IMR-90 (cell line): ENCODE measurements at regions of chr7 and their contacts with region 1.

Region 1: DNA sequence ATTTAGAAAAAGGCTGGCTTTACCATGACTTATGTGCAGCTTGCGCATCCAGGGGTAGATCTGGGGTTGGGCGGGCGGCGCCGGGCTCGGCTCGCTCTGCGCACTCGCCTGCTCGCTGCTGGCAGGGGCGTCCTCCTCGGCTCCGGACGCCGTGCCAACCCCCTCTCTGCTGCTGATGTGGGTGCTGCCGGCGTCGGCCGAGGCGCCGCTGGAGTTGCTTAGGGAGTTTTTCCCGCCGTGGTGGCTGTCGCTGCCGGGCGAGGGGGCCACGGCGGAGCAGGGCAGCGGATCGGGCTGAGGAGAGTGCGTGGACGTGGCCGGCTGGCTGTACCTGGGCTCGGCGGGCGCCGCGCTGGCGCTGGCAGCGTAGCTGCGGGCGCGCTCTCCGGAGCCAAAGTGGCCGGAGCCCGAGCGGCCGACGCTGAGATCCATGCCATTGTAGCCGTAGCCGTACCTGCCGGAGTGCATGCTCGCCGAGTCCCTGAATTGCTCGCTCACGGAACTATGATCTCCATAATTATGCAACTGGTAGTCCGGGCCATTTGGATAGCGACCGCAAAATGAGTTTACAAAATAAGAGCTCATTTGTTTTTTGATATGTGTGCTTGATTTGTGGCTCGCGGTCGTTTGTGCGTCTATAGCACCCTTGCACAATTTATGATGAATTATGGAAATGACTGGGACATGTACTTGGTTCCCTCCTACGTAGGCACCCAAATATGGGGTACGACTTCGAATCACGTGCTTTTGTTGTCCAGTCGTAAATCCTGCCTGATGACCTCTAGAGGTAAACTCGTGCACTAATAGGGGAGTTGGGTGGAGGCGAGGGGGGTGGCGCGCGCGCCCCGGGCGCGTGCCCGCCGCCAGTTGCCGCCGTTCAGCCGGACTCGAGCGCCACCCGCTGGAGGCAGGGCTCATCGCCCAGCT is at the start of gene HOXA5:
- DNase-seq: peak; percentile 100
- ATAC-seq: peak; percentile 64
- H3K4me3 ChIP-seq: peak within 1 kb of the TSS; percentile 93
- H3K27ac ChIP-seq: peak within 1 kb of the TSS; percentile 93
- H3K4me1 ChIP-seq: peaks cover 16% of the 10 kb centered on the region
- H3K27me3 ChIP-seq: no peaks in the 10 kb centered on the region
- CTCF ChIP-seq: peak; percentile 98
- POLR2A ChIP-seq: peak; percentile 89
- RAD21 ChIP-seq: peak; percentile 95
- total RNA-seq, gene HOXA5: 19.9 and 23.9 TPM in 2 replicates

Region 2: GRCh38 chr7:25862260-25863037 is 1280.8 kb before region 1 on chr7:
- CTCF ChIA-PET with region 1: no interaction called
- POLR2A ChIA-PET with region 1: no interaction called
- dilution Hi-C with region 1: no loop called
- in situ Hi-C with region 1: no loop called
- intact Hi-C with region 1: loop called (anchors 1 kb)
- DNase-seq: peak; percentile 100
- ATAC-seq: peak; percentile 97
- H3K4me3 ChIP-seq: no peak overlapping the region; the same call in 1 of the 2 replicates
- H3K27ac ChIP-seq: no peak overlapping the region
- H3K4me1 ChIP-seq: no peaks in the 10 kb centered on the region
- H3K27me3 ChIP-seq: peaks cover 10% of the 10 kb centered on the region
- CTCF ChIP-seq: no peak
- POLR2A ChIP-seq: no peak
- RAD21 ChIP-seq: no peak

Region 3: DNA sequence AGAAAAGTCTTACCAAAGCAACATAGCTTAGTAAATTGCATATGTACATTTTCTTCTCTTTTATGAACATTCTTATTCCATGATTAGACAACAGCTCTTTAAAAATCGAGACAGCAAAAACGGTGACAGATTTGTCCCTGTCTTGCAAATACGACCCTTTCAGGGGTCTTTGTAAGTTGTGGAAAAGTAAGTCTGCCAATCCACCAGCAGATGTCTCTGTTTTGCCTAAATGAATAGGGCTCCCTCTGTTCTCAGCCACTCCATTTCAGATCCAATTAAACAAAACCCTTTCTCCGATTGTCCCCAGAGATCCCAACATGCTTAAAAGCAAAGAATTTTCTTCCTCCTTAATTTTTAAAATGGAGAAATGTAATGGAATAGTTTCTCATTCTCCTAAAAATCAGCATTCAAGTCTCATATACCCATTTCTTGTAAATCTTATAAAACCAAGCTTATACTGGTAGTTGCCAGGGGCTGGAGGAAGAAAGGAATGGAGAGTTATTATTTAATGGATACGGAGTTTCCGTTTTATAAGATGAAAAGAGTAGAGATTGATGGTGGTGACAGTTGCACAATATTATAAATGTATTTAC is 1052.3 kb before region 1 on chr7:
- CTCF ChIA-PET with region 1: no interaction called
- POLR2A ChIA-PET with region 1: no interaction called
- dilution Hi-C with region 1: no loop called
- in situ Hi-C with region 1: no loop called
- intact Hi-C with region 1: loop called (anchors 5 kb)
- DNase-seq: peak; percentile 74
- ATAC-seq: peak; percentile 89
- H3K4me3 ChIP-seq: no peak overlapping the region
- H3K27ac ChIP-seq: no peak overlapping the region
- H3K4me1 ChIP-seq: no peaks in the 10 kb centered on the region
- H3K27me3 ChIP-seq: peaks cover 11% of the 10 kb centered on the region
- CTCF ChIP-seq: peak; percentile 76
- POLR2A ChIP-seq: no peak
- RAD21 ChIP-seq: peak; percentile 80

Region 4: GRCh38 chr7:26686448-26686981 is 456.8 kb before region 1 on chr7:
- CTCF ChIA-PET with region 1: interaction called, 9 read pairs
- POLR2A ChIA-PET with region 1: no interaction called
- dilution Hi-C with region 1: no loop called
- in situ Hi-C with region 1: no loop called
- intact Hi-C with region 1: loop called (anchors 1 kb)
- DNase-seq: peak; percentile 92
- ATAC-seq: peak; percentile 81
- H3K4me3 ChIP-seq: no peak overlapping the region
- H3K27ac ChIP-seq: peak overlapping the region; percentile 22; the same call in 1 of the 2 replicates
- H3K4me1 ChIP-seq: peaks cover 8% of the 10 kb centered on the region
- H3K27me3 ChIP-seq: no peaks in the 10 kb centered on the region
- CTCF ChIP-seq: peak; percentile 64
- POLR2A ChIP-seq: no peak
- RAD21 ChIP-seq: peak; percentile 61

Region 5: DNA sequence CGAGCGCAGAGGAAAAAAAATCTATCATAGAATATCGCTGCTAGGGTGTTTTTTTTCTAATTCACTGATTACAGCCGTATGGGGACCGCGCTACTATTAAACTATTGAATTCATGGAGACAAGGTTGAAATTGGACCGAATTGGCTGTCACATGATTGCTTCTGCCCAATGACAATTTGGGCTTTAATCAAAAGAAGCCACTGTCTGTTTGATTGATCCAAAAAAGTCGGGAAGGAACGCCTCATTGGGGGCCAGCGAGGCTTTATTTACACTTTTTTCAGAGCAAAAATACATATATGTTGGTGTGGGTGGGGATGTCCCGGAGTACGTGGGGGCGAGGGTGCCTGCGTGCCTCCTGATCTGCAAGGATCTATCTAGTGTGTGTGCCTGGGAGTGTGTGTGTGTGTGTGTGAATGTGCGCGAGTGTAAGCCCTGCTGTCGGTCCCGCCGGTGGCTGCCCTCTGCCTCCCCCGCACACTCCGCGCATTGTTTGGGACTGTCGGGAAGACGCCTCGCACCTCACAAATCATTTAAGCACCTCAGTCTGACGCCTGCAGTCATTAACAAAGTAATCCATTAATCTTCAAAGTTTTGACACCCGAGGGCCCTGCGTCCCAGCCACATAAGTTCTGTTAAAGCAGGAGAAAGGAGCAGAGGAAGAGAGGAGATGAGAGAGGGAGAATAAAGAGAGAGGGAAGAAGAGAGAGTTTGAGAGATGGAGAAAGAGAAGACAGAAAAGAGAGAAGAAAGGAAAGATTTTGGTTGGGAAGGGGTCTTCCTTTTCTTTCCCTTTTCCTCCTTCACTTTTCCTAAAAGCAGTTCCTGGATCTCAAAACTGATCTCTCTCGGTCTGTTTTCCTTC is 40.5 kb before region 1 on chr7 and contains the start of gene HOXA2:
- CTCF ChIA-PET with region 1: interaction called, 4 read pairs
- POLR2A ChIA-PET with region 1: no interaction called
- dilution Hi-C with region 1: no loop called
- in situ Hi-C with region 1: loop called (anchors 5 kb)
- intact Hi-C with region 1: no loop called
- DNase-seq: peak; percentile 91
- ATAC-seq: peak; percentile 18
- H3K4me3 ChIP-seq: peak within 1 kb of the TSS; percentile 52
- H3K27ac ChIP-seq: peak within 1 kb of the TSS; percentile 96
- H3K4me1 ChIP-seq: peaks cover 31% of the 10 kb centered on the region
- H3K27me3 ChIP-seq: no peaks in the 10 kb centered on the region
- CTCF ChIP-seq: no peak
- POLR2A ChIP-seq: no peak
- RAD21 ChIP-seq: no peak
- total RNA-seq, gene HOXA2: 1.6 and 1.7 TPM in 2 replicates

Region 6: GRCh38 chr7:27759491-27759890 is 616.2 kb after region 1 on chr7:
- CTCF ChIA-PET with region 1: no interaction called
- POLR2A ChIA-PET with region 1: no interaction called
- dilution Hi-C with region 1: no loop called
- in situ Hi-C with region 1: no loop called
- intact Hi-C with region 1: no loop called
- DNase-seq: peak; percentile 40
- ATAC-seq: peak; percentile 63
- H3K4me3 ChIP-seq: no peak overlapping the region
- H3K27ac ChIP-seq: no peak overlapping the region
- H3K4me1 ChIP-seq: peaks cover 4% of the 10 kb centered on the region
- H3K27me3 ChIP-seq: no peaks in the 10 kb centered on the region
- CTCF ChIP-seq: no peak
- POLR2A ChIP-seq: no peak
- RAD21 ChIP-seq: no peak